ENCODE measurements at regions of chr16 and their contacts with region 1.

Region 1: DNA sequence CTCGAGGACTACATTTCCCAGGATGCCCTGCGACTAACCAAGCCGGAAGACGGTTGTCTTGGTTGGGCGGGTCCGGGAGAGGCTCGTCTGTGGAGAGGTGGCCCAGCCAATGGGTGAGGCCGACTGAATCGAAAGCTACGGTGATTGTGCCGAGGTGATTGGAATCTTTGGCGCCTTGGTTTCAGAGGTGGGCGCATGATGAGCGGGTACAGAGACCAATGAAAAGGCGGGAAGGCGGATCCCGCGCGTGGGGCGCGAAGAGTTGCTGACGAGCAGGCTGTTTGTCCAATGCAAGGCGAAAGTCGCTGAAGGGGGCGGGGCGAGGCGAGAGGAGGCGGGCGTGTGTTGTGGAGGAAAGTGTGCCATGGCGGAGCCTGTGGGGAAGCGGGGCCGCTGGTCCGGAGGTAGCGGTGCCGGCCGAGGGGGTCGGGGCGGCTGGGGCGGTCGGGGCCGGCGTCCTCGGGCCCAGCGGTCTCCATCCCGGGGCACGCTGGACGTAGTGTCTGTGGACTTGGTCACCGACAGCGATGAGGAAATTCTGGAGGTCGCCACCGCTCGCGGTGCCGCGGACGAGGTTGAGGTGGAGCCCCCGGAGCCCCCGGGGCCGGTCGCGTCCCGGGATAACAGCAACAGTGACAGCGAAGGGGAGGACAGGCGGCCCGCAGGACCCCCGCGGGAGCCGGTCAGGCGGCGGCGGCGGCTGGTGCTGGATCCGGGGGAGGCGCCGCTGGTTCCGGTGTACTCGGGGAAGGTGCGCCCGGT is at the start of gene NFATC2IP:
- DNase-seq: peak; percentile 99
- H3K4me3 ChIP-seq: peak within 1 kb of the TSS; percentile 79
- CTCF ChIP-seq: no peak

Region 2: DNA sequence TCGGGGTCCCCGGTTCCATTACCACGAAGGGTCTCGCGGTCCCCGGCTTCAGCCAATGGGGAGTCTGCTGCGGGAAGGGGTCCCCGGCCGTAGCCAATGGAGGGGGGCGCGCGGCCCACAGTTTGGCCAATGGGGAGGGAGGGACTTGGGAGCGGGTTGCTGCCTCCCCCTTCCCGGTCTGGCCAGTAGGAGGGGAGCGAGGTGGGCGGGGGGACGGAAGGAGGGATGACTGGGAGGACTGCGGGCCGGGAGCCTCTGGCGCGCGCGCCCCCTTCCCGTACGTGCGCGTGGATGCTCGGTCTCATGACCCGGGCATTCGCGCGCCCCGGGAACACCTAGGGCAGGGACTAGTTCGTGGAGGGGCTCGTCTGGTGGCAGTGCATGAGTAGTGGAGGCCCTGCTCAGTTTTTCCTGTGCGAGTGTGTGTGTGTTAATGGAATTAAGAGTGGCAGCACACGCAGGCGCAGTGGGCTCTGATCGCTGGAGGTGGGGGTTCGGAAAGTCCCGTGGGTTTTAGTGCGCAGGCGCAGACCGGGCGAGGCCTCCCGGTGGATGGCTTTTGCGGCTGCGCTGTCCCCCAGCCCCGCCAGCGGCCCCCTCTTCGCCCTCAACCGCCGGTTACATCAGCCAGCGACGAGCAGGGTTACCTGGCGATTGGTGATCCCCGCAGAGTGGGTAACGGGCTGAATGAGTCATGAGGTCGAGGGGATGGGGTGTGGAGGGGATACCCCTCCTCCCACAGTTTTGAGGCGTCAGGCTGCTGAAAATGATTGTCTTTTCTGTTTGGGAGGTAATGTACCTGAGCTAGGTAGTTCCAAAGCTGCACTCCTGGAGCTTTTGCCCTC is 126.7 kb before region 1 on chr16:
- CTCF ChIA-PET with region 1: interaction called, 13 read pairs
- POLR2A ChIA-PET with region 1: no interaction called
- DNase-seq: peak; percentile 90
- H3K4me3 ChIP-seq: peak overlapping the region; percentile 97
- CTCF ChIP-seq: peak; percentile 36

Region 3: DNA sequence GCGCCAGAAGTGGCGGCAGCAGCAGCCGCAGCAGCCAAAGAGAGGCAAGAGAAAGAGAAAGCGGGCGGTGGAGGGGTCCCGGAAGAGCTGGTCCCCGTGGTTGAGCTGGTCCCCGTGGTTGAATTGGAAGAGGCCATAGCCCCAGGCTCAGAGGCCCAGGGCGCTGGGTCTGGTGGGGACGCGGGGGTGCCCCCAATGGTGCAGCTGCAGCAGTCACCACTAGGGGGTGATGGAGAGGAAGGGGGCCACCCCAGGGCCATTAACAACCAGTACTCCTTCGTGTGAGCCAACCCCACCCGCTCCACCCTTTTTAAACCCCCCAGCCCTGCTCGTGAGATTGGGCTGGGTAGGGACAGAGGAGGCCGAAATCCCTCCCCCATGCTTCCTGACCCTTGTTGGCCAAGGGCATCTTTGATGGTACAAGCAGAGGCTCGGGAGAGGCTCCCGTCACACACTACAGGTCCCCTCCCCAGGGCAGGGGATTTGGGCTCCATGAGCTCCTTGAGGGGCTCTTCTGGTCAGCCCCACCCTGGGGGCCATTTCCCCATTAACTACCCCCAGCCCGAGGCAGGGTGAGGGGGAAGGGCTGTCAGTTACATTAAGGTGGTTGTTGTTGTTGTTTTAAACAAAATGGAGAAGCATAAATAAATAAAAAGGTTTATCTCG is 77.2 kb before region 1 on chr16:
- CTCF ChIA-PET with region 1: interaction called, 27 read pairs
- POLR2A ChIA-PET with region 1: no interaction called
- DNase-seq: no peak
- H3K4me3 ChIP-seq: no peak overlapping the region
- CTCF ChIP-seq: peak; percentile 61

Region 4: GRCh38 chr16:28974437-28975157 is 23.8 kb after region 1 on chr16 and contains the start of gene SPNS1:
- CTCF ChIA-PET with region 1: interaction called, 15 read pairs
- POLR2A ChIA-PET with region 1: no interaction called
- DNase-seq: peak; percentile 77
- H3K4me3 ChIP-seq: peak within 1 kb of the TSS; percentile 99
- CTCF ChIP-seq: no peak

Measured in AG04449 (cell line).